ENCODE measurements at regions of chr10 and their contacts with region 1.

Region 1: DNA sequence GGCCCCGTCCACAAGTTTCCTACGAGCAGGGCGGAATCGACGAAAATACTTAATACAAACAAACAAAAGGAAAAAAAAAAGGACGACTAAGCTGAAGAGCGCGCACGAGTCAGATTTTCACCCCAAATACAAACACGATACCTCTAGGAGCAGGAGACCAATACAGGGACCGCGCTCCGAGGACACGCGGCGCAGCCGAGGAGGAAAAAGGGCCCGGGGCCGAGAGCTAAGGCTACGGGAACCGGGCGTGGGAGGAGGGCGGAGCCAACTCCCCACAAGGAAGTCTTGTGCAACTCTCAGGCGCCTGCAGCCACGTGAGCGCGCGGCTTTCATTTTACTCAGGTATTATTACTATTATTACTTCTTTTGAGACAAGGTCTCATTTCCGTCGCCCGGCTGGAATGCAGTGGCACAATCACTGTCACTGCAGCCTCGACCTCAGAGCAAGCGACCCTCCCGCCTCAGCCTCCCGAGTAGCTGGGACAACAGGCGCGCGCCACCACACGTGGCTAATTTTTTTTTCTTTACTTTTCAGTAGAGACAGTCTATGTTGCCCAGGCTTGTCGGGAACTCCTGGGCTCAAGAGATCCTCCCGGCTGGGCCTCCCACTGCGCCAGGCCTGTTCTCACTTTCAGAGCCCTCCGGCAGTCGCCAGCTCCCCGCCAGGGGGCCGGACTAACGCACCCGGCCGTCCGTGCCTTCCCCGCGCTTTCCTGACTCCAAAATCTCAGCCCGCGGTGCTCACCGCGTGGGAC is 1.2 kb downstream of the HNRNPF start:
- DNase-seq: peak; percentile 92
- ATAC-seq: peak; percentile 44
- H3K4me3 ChIP-seq: peak overlapping the region; percentile 43 to 92 (median 83)
- H3K4me3 Mint-ChIP-seq: peak overlapping the region; percentile 98
- H3K27ac ChIP-seq: peak overlapping the region; percentile 100
- H3K27ac Mint-ChIP-seq: peak overlapping the region; percentile 98
- H3K4me1 ChIP-seq: peaks cover 38 to 55% of the 10 kb centered on the region in 2 donors
- H3K4me1 Mint-ChIP-seq: peaks cover 37% of the 10 kb centered on the region
- H3K27me3 ChIP-seq: no peaks in the 10 kb centered on the region
- H3K27me3 Mint-ChIP-seq: no peaks in the 10 kb centered on the region
- CTCF ChIP-seq: peak; percentile 70

Region 2: GRCh38 chr10:42638055-42638820 is 769.5 kb before region 1 on chr10 and contains the start of gene ZNF33B:
- CTCF ChIA-PET with region 1: no interaction called
- POLR2A ChIA-PET with region 1: no interaction called
- intact Hi-C with region 1: loop called (anchors 5 kb)
- DNase-seq: peak; percentile 95
- ATAC-seq: peak; percentile 94
- H3K4me3 ChIP-seq: peak within 1 kb of the TSS; percentile 86 to 97 (median 90)
- H3K4me3 Mint-ChIP-seq: peak within 1 kb of the TSS; percentile 99
- H3K27ac ChIP-seq: peak within 1 kb of the TSS; percentile 87 to 92
- H3K27ac Mint-ChIP-seq: peak within 1 kb of the TSS; percentile 99
- H3K4me1 ChIP-seq: peaks cover 14 to 15% of the 10 kb centered on the region in 2 donors
- H3K4me1 Mint-ChIP-seq: peaks cover 40% of the 10 kb centered on the region
- H3K27me3 ChIP-seq: no peaks in the 10 kb centered on the region
- H3K27me3 Mint-ChIP-seq: no peaks in the 10 kb centered on the region
- CTCF ChIP-seq: no peak
- total RNA-seq, gene ZNF33B: 66.6 and 66.9 TPM in 2 replicates

Region 3: GRCh38 chr10:42911359-42911758 is 496.4 kb before region 1 on chr10:
- CTCF ChIA-PET with region 1: no interaction called
- POLR2A ChIA-PET with region 1: no interaction called
- intact Hi-C with region 1: no loop called
- DNase-seq: no peak
- ATAC-seq: no peak
- H3K4me3 ChIP-seq: no peak overlapping the region
- H3K4me3 Mint-ChIP-seq: no peak overlapping the region
- H3K27ac ChIP-seq: no peak overlapping the region
- H3K27ac Mint-ChIP-seq: no peak overlapping the region
- H3K4me1 ChIP-seq: no peaks in the 10 kb centered on the region
- H3K4me1 Mint-ChIP-seq: no peaks in the 10 kb centered on the region
- H3K27me3 ChIP-seq: peaks cover 0 to 2% (median 0%) of the 10 kb centered on the region in 4 experiments
- H3K27me3 Mint-ChIP-seq: no peaks in the 10 kb centered on the region
- CTCF ChIP-seq: no peak

Region 4: DNA sequence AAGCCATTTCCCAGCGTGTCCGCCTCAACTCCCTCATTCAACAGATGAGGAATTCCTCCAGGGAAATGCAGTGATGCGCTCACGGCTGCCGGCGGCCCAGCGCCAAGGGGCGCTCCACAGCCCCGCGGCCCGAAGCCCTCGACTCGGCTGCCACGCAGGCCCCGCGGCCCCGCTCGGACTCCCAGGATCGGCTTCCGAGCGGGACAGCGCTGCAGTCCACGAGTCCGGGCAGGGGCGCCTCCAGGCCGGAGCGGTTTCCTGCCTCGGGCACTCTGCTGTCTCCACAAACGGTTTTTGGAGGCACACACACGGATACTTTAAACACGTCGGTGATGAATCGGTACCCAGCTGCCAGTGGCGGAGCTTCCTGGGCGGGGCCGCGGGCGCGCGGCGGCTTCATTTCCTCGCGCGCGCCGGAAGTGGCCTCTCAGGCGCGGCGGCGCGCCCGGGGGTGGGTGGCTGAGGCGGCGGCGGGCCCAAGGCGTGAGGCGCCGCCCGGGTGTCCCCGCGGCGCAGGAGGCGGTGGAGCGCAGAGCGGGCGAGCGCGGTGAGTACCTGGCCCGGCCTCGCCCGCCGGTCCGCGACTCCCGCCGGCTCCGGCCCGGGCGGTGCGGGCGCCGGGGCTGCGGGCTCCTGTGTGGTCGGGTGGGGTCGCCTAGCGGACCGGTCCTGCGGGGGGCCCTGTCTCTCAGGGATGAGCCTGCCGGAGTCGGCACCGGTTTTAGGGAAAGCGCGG is 269.6 kb before region 1 on chr10 and contains the start of gene CSGALNACT2:
- CTCF ChIA-PET with region 1: interaction called, 4 read pairs
- POLR2A ChIA-PET with region 1: no interaction called
- intact Hi-C with region 1: loop called (anchors 5 kb)
- DNase-seq: peak; percentile 93
- ATAC-seq: peak; percentile 84
- H3K4me3 ChIP-seq: peak within 1 kb of the TSS; percentile 75 to 98 (median 83)
- H3K4me3 Mint-ChIP-seq: peak within 1 kb of the TSS; percentile 99
- H3K27ac ChIP-seq: peak within 1 kb of the TSS; percentile 92 to 95
- H3K27ac Mint-ChIP-seq: peak within 1 kb of the TSS; percentile 98
- H3K4me1 ChIP-seq: peaks cover 31 to 32% of the 10 kb centered on the region in 2 donors
- H3K4me1 Mint-ChIP-seq: peaks cover 48% of the 10 kb centered on the region
- H3K27me3 ChIP-seq: no peaks in the 10 kb centered on the region
- H3K27me3 Mint-ChIP-seq: no peaks in the 10 kb centered on the region
- CTCF ChIP-seq: peak; percentile 5
- total RNA-seq, gene CSGALNACT2: 24.0 and 25.0 TPM in 2 replicates

Region 5: GRCh38 chr10:43287056-43288007 is 120.4 kb before region 1 on chr10:
- CTCF ChIA-PET with region 1: no interaction called
- POLR2A ChIA-PET with region 1: no interaction called
- intact Hi-C with region 1: no loop called
- DNase-seq: peak; percentile 30
- ATAC-seq: peak; percentile 81
- H3K4me3 ChIP-seq: no peak overlapping the region
- H3K4me3 Mint-ChIP-seq: peak overlapping the region; percentile 15
- H3K27ac ChIP-seq: peak overlapping the region in 1 of 2 donors; percentile 23
- H3K27ac Mint-ChIP-seq: peak overlapping the region; percentile 2
- H3K4me1 ChIP-seq: peaks cover 14 to 19% of the 10 kb centered on the region in 2 donors
- H3K4me1 Mint-ChIP-seq: peaks cover 16% of the 10 kb centered on the region
- H3K27me3 ChIP-seq: peaks cover 0 to 8% (median 4%) of the 10 kb centered on the region in 4 experiments
- H3K27me3 Mint-ChIP-seq: peaks cover 11% of the 10 kb centered on the region
- CTCF ChIP-seq: no peak

Region 6: GRCh38 chr10:43390759-43391158 is 17.0 kb before region 1 on chr10:
- CTCF ChIA-PET with region 1: interaction called, 7 read pairs
- POLR2A ChIA-PET with region 1: interaction called, 21 read pairs
- intact Hi-C with region 1: loop called (anchors 2 kb)
- DNase-seq: peak; percentile 58
- ATAC-seq: no peak
- H3K4me3 ChIP-seq: no peak overlapping the region
- H3K4me3 Mint-ChIP-seq: no peak overlapping the region
- H3K27ac ChIP-seq: peak overlapping the region in 1 of 2 donors; percentile 52
- H3K27ac Mint-ChIP-seq: peak overlapping the region; percentile 51
- H3K4me1 ChIP-seq: peaks cover 28 to 39% of the 10 kb centered on the region in 2 donors
- H3K4me1 Mint-ChIP-seq: peaks cover 65% of the 10 kb centered on the region
- H3K27me3 ChIP-seq: no peaks in the 10 kb centered on the region
- H3K27me3 Mint-ChIP-seq: no peaks in the 10 kb centered on the region
- CTCF ChIP-seq: peak; percentile 53

Region 7: GRCh38 chr10:43420369-43421200 is 12.8 kb after region 1 on chr10:
- CTCF ChIA-PET with region 1: interaction called, 13 read pairs
- POLR2A ChIA-PET with region 1: interaction called, 19 read pairs
- intact Hi-C with region 1: loop called (anchors 1 kb)
- DNase-seq: peak; percentile 85
- ATAC-seq: peak; percentile 83
- H3K4me3 ChIP-seq: peak overlapping the region; percentile 25 to 80 (median 70)
- H3K4me3 Mint-ChIP-seq: peak overlapping the region; percentile 95
- H3K27ac ChIP-seq: peak overlapping the region; percentile 90 to 95
- H3K27ac Mint-ChIP-seq: peak overlapping the region; percentile 98
- H3K4me1 ChIP-seq: peaks cover 28 to 38% of the 10 kb centered on the region in 2 donors
- H3K4me1 Mint-ChIP-seq: peaks cover 26% of the 10 kb centered on the region
- H3K27me3 ChIP-seq: no peaks in the 10 kb centered on the region
- H3K27me3 Mint-ChIP-seq: no peaks in the 10 kb centered on the region
- CTCF ChIP-seq: peak; percentile 35

Region 8: DNA sequence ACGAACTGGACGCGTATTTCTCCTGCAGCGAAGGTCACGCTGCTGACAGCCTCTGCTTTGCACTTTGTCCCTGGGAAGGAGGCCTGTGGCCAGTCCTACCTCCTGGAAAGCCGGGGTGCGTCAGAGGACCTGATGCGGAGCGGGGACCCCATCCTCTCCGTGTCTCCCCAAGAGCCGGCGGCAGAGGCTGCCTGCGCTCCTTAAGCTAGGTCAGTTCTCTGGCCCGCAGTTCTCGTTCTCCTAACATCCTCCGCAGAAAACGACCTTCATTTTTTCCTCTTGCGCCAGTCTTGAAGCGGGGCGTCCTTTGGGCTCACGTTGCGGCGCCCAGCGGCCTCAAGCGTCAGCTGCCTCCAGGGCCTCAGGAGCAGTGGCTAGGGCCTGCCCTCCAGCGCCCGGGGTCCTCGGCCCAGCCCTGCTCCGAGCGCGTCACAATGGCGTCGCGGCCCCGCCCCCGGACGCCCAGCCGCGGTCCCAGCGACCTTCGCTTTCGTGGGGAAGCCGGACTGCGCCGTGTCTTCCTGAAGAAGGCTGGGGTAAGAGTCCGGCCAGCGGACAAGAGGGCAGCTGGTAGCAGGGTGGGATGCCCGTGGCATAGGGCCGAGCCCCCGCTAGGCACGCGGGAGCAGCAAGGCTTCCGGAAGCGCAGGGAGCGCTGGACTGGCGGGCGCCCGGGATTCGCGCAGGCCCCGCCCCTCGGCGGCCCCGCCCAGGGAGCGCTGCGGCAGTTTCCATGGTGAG is 28.8 kb after region 1 on chr10 and contains the start of gene ZNF487:
- CTCF ChIA-PET with region 1: interaction called, 6 read pairs
- POLR2A ChIA-PET with region 1: interaction called, 13 read pairs
- intact Hi-C with region 1: loop called (anchors 1 kb)
- DNase-seq: peak; percentile 97
- ATAC-seq: peak; percentile 91
- H3K4me3 ChIP-seq: peak within 1 kb of the TSS; percentile 65 to 99 (median 81)
- H3K4me3 Mint-ChIP-seq: peak within 1 kb of the TSS; percentile 98
- H3K27ac ChIP-seq: peak within 1 kb of the TSS; percentile 97 to 98
- H3K27ac Mint-ChIP-seq: peak within 1 kb of the TSS; percentile 99
- H3K4me1 ChIP-seq: peaks cover 17 to 47% of the 10 kb centered on the region in 2 donors
- H3K4me1 Mint-ChIP-seq: peaks cover 34% of the 10 kb centered on the region
- H3K27me3 ChIP-seq: no peaks in the 10 kb centered on the region
- H3K27me3 Mint-ChIP-seq: no peaks in the 10 kb centered on the region
- CTCF ChIP-seq: no peak
- total RNA-seq, gene ZNF487: 6.7 and 9.8 TPM in 2 replicates

Region 9: GRCh38 chr10:43648398-43649184 is 240.8 kb after region 1 on chr10 and contains the start of gene ZNF32:
- CTCF ChIA-PET with region 1: no interaction called
- POLR2A ChIA-PET with region 1: no interaction called
- intact Hi-C with region 1: loop called (anchors 5 kb)
- DNase-seq: peak; percentile 89
- ATAC-seq: peak; percentile 99
- H3K4me3 ChIP-seq: peak within 1 kb of the TSS; percentile 22 to 82 (median 63)
- H3K4me3 Mint-ChIP-seq: peak within 1 kb of the TSS; percentile 98
- H3K27ac ChIP-seq: peak within 1 kb of the TSS in 1 of 2 donors; percentile 86
- H3K27ac Mint-ChIP-seq: peak within 1 kb of the TSS; percentile 89
- H3K4me1 ChIP-seq: peaks cover 7 to 13% of the 10 kb centered on the region in 2 donors
- H3K4me1 Mint-ChIP-seq: peaks cover 16% of the 10 kb centered on the region
- H3K27me3 ChIP-seq: peaks cover 0 to 6% (median 0%) of the 10 kb centered on the region in 4 experiments
- H3K27me3 Mint-ChIP-seq: peaks cover 10% of the 10 kb centered on the region
- CTCF ChIP-seq: no peak
- total RNA-seq, gene ZNF32: 29.6 and 35.8 TPM in 2 replicates

Region 10: GRCh38 chr10:44195112-44196007 is 787.6 kb after region 1 on chr10:
- CTCF ChIA-PET with region 1: no interaction called
- POLR2A ChIA-PET with region 1: no interaction called
- intact Hi-C with region 1: no loop called
- DNase-seq: no peak
- ATAC-seq: no peak
- H3K4me3 ChIP-seq: no peak overlapping the region
- H3K4me3 Mint-ChIP-seq: no peak overlapping the region
- H3K27ac ChIP-seq: no peak overlapping the region
- H3K27ac Mint-ChIP-seq: no peak overlapping the region
- H3K4me1 ChIP-seq: no peaks in the 10 kb centered on the region
- H3K4me1 Mint-ChIP-seq: no peaks in the 10 kb centered on the region
- H3K27me3 ChIP-seq: no peaks in the 10 kb centered on the region
- H3K27me3 Mint-ChIP-seq: no peaks in the 10 kb centered on the region
- CTCF ChIP-seq: no peak

Measured in B cell (primary cell).